BJ (cell line): ENCODE measurements at regions of chr12 and their contacts with region 1.

Region 1: DNA sequence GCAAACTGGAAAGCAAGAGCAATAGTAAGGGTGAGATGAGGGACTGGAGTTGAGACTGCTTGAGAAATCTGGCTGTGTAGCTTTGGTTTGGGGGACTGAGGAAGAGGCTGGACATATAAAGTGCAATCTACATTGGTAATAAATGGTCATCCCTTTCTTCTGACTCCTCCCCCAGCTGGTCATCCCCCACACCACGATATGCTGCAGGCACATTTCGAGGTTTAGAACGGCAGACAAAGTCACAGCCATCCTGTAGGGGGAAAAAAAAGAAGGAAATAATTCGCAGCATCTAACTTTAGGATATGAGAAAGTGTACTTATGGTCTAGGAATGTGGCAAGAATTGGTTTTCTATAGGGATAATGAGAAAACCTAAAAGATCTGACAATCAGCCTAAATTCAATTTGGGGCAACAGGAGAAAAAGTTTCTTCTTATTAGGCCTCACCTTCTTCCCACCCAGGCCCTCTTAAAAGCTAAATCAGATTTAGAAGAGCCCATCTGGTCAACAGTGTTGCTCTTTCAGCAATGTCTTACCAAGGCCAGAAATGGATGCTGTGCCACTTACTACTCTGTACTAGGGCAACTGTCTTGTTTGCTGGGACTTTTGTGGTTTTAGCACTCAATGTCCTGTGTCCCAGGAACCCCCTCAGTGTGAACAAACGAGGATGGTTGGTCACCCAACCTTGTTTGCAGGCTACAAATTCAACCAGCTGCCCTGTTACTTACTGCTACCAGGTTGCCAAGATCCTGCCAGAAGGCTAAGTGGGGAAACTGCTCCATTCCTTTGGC is 7.6 kb downstream of the M6PR start:
- DNase-seq: no peak
- H3K4me3 ChIP-seq: no peak overlapping the region
- H3K27me3 ChIP-seq: no peaks in the 10 kb centered on the region
- CTCF ChIP-seq: no peak

Region 2: GRCh38 chr12:8712572-8712971 is 229.3 kb before region 1 on chr12:
- CTCF ChIA-PET with region 1: no interaction called
- POLR2A ChIA-PET with region 1: interaction called, 15 read pairs
- DNase-seq: no peak
- H3K4me3 ChIP-seq: no peak overlapping the region
- H3K27me3 ChIP-seq: no peaks in the 10 kb centered on the region
- CTCF ChIP-seq: no peak

Region 3: DNA sequence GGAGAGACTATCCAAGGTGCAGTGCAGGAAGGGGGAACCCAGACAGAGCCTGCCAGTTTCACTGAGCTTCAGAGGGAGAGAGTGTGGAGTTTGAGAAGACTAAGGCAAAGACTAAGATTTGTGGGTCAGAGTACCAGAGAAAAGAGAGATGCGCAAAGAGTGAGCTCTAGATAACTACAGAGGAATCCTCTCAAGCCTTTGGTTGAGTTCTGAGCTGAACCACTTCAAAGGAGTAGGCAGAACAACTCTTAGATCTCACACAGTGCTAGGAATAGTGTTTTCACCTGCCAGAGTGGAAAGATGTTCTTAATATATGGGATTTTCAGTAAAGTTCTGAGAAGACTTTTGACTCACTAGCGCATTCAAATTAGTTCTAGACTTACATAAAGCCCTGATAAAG is 18.3 kb after region 1 on chr12:
- CTCF ChIA-PET with region 1: no interaction called
- POLR2A ChIA-PET with region 1: no interaction called
- DNase-seq: no peak
- H3K4me3 ChIP-seq: no peak overlapping the region
- H3K27me3 ChIP-seq: no peaks in the 10 kb centered on the region
- CTCF ChIP-seq: no peak